ENCODE measurements at regions of chrX and their contacts with region 1.

Region 1: DNA sequence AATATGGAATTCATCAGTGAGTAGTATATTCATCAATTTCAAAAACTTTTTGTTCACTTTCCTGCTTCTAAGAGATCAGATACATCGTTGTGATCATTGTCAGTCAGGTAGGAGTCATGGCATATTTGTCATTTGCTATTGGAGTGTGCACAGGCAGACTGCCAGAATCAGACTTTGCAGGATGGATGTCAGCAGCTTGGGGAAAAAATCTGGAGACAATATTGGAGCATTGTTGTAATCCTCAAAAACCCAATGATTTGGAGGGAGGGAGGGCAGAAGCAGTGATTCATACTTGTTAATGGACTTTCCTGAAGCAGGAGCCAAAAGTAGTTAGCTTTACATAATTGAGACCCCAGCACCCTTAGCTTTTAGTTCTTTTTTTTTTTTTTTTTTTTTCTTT is 59.6 kb upstream of the DRP2 start:
- DNase-seq: no peak
- ATAC-seq: no peak
- H3K4me3 ChIP-seq: no peak overlapping the region
- H3K4me3 Mint-ChIP-seq: no peak overlapping the region
- H3K27ac ChIP-seq: no peak overlapping the region
- H3K27ac Mint-ChIP-seq: no peak overlapping the region
- H3K4me1 ChIP-seq: no peaks in the 10 kb centered on the region
- H3K4me1 Mint-ChIP-seq: no peaks in the 10 kb centered on the region
- H3K27me3 ChIP-seq: no peaks in the 10 kb centered on the region
- H3K27me3 Mint-ChIP-seq: peaks cover 0 to 4% of the 10 kb centered on the region in 2 donors

Region 2: DNA sequence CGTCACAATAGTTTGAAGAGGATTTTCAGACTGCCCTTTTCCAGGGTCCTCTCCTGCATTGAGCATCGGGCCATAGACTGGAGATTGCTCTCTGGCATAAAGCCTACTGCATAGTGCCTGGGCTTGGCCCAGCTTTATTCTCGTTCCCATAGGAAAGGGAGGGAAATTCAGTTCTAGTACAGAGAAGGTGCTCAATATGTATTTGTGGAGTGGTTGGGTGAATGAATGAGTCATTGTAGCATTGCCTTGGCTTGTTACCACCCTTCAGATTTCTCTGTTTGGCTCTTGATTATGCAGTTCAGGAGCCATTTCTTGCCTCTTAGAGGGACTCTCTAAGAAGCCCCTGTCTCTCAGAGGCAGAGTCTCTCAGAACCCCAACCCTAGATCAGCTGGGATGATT is 78.8 kb before region 1 on chrX:
- CTCF ChIA-PET with region 1: no interaction called
- POLR2A ChIA-PET with region 1: no interaction called
- DNase-seq: no peak
- ATAC-seq: no peak
- H3K4me3 ChIP-seq: no peak overlapping the region
- H3K4me3 Mint-ChIP-seq: no peak overlapping the region
- H3K27ac ChIP-seq: no peak overlapping the region
- H3K27ac Mint-ChIP-seq: no peak overlapping the region
- H3K4me1 ChIP-seq: no peaks in the 10 kb centered on the region
- H3K4me1 Mint-ChIP-seq: peaks cover 0 to 6% (median 5%) of the 10 kb centered on the region in 3 donors
- H3K27me3 ChIP-seq: peaks cover 0 to 16% of the 10 kb centered on the region in 2 experiments
- H3K27me3 Mint-ChIP-seq: peaks cover 17 to 29% of the 10 kb centered on the region in 2 donors

Region 3: DNA sequence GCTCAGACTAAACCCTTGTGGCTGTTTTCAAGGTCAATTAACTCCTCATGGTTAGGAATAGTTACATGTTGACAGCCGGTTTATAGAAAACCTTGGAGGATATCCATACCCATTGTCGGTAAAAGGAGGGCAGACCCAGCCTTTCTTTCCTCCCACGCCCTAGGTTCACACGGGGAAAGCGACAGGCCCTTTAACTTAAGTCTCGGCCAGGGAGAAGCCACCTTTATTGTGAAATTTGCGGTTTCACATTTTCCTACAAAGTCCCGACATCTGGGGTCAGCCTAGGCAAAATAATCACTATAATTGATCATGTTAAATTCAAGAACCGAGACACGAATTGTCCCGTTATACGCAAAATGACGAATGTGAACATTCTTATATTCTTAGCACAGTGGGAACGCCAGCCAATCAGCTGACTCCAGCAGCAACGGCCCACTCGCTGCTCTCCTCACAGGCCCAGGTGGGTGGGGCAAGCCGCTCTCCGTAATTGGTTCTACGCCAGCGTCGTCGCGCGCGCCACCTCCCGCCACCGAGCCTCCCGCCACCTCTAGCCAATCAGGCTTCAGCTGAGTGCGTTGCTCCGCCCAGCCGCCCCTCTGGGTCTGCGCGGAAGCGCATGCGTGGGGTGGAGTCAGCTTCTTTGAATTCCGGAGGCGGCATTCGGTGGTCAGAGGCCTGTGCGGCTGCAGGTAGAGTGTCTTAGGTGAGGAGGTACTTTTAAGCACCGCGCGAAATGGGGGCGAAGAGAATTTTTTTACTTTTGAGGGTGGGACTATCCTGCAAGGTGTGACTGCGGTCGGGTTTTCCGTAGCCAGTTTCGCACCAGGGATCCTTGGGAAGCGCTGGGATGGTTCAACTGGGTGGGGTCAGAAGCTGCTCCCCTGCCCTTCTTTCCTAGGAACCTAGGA is 62.2 kb before region 1 on chrX and contains the start of gene CENPI:
- CTCF ChIA-PET with region 1: interaction called in 1 of 2 experiments, 12 read pairs
- POLR2A ChIA-PET with region 1: no interaction called
- DNase-seq: peak; percentile 80 to 95 (median 91)
- ATAC-seq: peak; percentile 99 to 100 (median 100)
- H3K4me3 ChIP-seq: peak within 1 kb of the TSS; percentile 11 to 54
- H3K4me3 Mint-ChIP-seq: peak within 1 kb of the TSS; percentile 73 to 87 (median 84)
- H3K27ac ChIP-seq: peak within 1 kb of the TSS; percentile 69
- H3K27ac Mint-ChIP-seq: peak within 1 kb of the TSS; percentile 83 to 94
- H3K4me1 ChIP-seq: peaks cover 2 to 3% of the 10 kb centered on the region in 2 experiments
- H3K4me1 Mint-ChIP-seq: peaks cover 2 to 14% (median 11%) of the 10 kb centered on the region in 3 donors
- H3K27me3 ChIP-seq: no peaks in the 10 kb centered on the region
- H3K27me3 Mint-ChIP-seq: peaks cover 0 to 3% of the 10 kb centered on the region in 2 donors
- total RNA-seq, gene CENPI: 0.42 to 0.95 (median 0.85) TPM

Region 4: GRCh38 chrX:101368800-101369199 is 208.8 kb after region 1 on chrX:
- CTCF ChIA-PET with region 1: no interaction called
- POLR2A ChIA-PET with region 1: no interaction called
- DNase-seq: no peak
- ATAC-seq: no peak
- H3K4me3 ChIP-seq: no peak overlapping the region
- H3K4me3 Mint-ChIP-seq: no peak overlapping the region
- H3K27ac ChIP-seq: no peak overlapping the region
- H3K27ac Mint-ChIP-seq: no peak overlapping the region
- H3K4me1 ChIP-seq: no peaks in the 10 kb centered on the region
- H3K4me1 Mint-ChIP-seq: peaks cover 0 to 4% (median 0%) of the 10 kb centered on the region in 3 donors
- H3K27me3 ChIP-seq: no peaks in the 10 kb centered on the region
- H3K27me3 Mint-ChIP-seq: peaks cover 0 to 18% of the 10 kb centered on the region in 2 donors

Measured in T-cell (primary cell).